Activated CD8-positive, alpha-beta T cell treated with anti-CD3 and anti-CD28 coated beads for 36 hours (primary cell): ENCODE measurements at regions of chr17 and their contacts with region 1.

Region 1: DNA sequence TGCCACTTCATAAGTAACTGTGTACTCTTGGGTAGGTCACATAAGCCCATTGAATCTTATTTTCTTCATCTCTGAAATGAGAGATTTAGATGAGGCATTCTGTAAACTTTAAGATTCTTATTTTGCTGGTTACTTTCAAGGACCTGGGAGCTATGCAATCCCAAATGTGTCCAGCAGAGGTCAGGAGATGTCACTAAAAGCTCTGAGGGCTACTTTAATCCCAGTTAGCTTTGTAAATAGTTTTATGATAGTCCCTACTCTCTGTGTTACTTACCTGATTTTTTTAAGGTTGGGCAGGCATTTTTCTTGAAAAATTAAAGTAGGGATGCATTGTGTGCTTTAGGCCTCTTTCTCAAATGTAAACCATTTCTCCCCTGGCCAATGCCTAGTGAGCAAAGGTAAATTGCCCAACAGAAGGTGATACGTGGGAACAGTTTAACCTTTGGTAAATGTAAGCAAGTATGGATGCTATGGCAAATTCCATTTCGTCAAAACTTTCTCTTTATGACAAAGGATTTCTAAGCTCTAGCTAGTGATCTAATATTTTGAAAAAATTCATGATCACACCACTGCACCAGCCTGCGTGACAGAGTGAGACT is 57.1 kb upstream of the WSB1 start:
- DNase-seq: peak; percentile 91
- ATAC-seq: peak; percentile 77
- H3K4me3 Mint-ChIP-seq: no peak overlapping the region
- H3K27ac Mint-ChIP-seq: no peak overlapping the region
- H3K4me1 Mint-ChIP-seq: peaks cover 16% of the 10 kb centered on the region
- H3K27me3 Mint-ChIP-seq: peaks cover 3% of the 10 kb centered on the region
- CTCF ChIP-seq: peak; percentile 83

Region 2: DNA sequence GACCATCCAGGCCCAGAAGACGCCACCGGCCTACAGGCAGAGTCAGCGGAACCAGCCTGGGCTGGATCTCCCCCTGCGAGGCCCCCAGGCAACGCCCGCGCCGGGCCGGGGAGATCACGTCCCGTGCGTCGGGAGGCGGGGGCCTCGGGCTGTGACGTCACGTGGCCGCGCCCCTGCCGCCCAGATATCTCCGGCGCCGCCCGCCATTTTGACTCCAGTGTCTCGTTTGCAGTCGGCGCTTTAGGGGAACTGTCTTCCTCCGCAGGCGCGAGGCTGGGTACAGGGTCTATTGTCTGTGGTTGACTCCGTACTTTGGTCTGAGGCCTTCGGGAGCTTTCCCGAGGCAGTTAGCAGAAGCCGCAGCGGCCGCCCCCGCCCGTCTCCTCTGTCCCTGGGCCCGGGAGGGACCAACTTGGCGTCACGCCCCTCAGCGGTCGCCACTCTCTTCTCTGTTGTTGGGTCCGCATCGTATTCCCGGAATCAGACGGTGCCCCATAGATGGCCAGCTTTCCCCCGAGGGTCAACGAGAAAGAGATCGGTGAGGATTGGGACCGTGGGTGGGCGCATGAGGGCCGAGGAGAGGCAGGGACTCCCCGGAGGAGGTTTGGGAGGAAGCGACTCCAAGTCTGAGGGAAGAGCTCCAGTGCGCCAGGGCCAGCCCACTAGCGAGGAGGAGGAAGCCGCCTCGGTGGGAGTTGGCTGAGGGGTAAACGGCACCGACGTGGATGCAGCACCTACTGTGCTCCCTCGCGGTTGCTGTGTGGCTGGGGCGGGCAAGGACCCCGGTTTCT is 57.3 kb after region 1 on chr17 and contains the start of gene WSB1:
- CTCF ChIA-PET with region 1: interaction called, 18 read pairs
- POLR2A ChIA-PET with region 1: interaction called, 3 read pairs
- intact Hi-C with region 1: loop called (anchors 10 kb)
- DNase-seq: peak; percentile 94
- ATAC-seq: peak; percentile 88
- H3K4me3 Mint-ChIP-seq: peak within 1 kb of the TSS; percentile 98
- H3K27ac Mint-ChIP-seq: peak within 1 kb of the TSS; percentile 99
- H3K4me1 Mint-ChIP-seq: peaks cover 33% of the 10 kb centered on the region
- H3K27me3 Mint-ChIP-seq: no peaks in the 10 kb centered on the region
- CTCF ChIP-seq: no peak
- total RNA-seq, gene WSB1: 224 to 231 TPM

Region 3: GRCh38 chr17:27345141-27345904 is 108.5 kb after region 1 on chr17:
- CTCF ChIA-PET with region 1: interaction called, 12 read pairs
- POLR2A ChIA-PET with region 1: interaction called, 3 read pairs
- intact Hi-C with region 1: no loop called
- DNase-seq: no peak
- ATAC-seq: no peak
- H3K4me3 Mint-ChIP-seq: no peak overlapping the region
- H3K27ac Mint-ChIP-seq: no peak overlapping the region
- H3K4me1 Mint-ChIP-seq: peaks cover 16% of the 10 kb centered on the region
- H3K27me3 Mint-ChIP-seq: peaks cover 5% of the 10 kb centered on the region
- CTCF ChIP-seq: no peak

Region 4: DNA sequence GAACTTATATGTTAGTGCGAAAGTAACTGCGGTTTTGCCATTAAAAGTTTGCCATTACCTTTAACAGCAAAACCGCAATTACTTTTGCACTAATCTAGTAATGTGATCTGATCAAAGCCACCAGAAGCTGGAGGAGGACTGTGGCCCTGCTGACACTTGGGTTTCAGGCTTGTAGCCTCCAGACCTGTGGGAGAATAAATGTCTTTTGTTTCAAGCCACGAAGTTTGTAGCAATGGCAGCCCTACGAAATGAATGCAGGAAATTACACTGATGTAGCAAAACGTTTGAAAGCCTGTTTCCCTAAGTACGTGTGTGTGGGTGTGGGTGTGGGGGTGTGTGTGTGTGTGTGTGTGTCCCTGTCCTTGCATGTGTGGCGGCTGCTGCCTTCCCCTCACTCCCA is 123.7 kb after region 1 on chr17:
- CTCF ChIA-PET with region 1: interaction called, 16 read pairs
- POLR2A ChIA-PET with region 1: no interaction called
- intact Hi-C with region 1: no loop called
- DNase-seq: no peak
- ATAC-seq: no peak
- H3K4me3 Mint-ChIP-seq: no peak overlapping the region
- H3K27ac Mint-ChIP-seq: no peak overlapping the region
- H3K4me1 Mint-ChIP-seq: peaks cover 10% of the 10 kb centered on the region
- H3K27me3 Mint-ChIP-seq: no peaks in the 10 kb centered on the region
- CTCF ChIP-seq: no peak